Activated T-helper 2 cell treated with anti-CD3 and anti-CD28 coated beads, Interferon-gamma antibody, Interleukin-2, Interleukin-4, amounts not matched to agents 10 μg/mL and 5 μg/mL and 100 μg/mL, durations not matched to agents 14 hours and 24 hours and 36 hours (primary cell): ENCODE measurements at regions of chr13 and their contacts with region 1.

Region 1: DNA sequence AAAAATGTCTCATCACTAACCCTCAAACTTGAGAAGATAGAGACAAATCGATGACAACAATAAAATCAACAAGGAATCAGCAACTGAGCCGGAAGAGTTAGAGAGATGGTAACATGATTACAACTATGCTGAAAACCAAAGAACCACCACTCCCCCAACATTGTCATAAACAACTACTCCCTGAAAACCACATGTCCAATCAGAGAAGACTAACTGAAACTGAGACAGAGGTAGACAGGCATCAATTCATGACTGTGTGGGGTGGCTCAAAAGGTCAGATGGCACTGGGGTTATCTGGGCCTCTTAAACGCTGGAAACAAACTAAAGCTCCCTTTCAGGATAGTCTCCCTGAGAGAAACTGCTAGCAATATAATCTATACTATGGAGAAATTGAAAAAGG is 488.8 kb downstream of the KCTD12 start:
- DNase-seq: peak; percentile 11
- H3K4me3 Mint-ChIP-seq: no peak overlapping the region
- H3K27ac Mint-ChIP-seq: peak overlapping the region; percentile 73
- H3K4me1 Mint-ChIP-seq: peaks cover 12% of the 10 kb centered on the region
- H3K27me3 Mint-ChIP-seq: no peaks in the 10 kb centered on the region

Region 2: GRCh38 chr13:76516013-76516412 is 118.6 kb after region 1 on chr13:
- intact Hi-C with region 1: loop called (anchors 5 kb)
- DNase-seq: no peak
- H3K4me3 Mint-ChIP-seq: no peak overlapping the region
- H3K27ac Mint-ChIP-seq: no peak overlapping the region
- H3K4me1 Mint-ChIP-seq: no peaks in the 10 kb centered on the region
- H3K27me3 Mint-ChIP-seq: peaks cover 2% of the 10 kb centered on the region